ENCODE measurements at regions of chr4 and their contacts with region 1.

Region 1: GRCh38 chr4:17636696-17637622 is 22.5 kb downstream of the MED28 start:
- DNase-seq: peak; percentile 46 to 80 (median 72)
- ATAC-seq: peak; percentile 87
- H3K4me3 ChIP-seq: no peak overlapping the region
- H3K4me3 Mint-ChIP-seq: no peak overlapping the region
- H3K27ac ChIP-seq: no peak overlapping the region
- H3K27ac Mint-ChIP-seq: no peak overlapping the region
- H3K4me1 ChIP-seq: no peaks in the 10 kb centered on the region
- H3K4me1 Mint-ChIP-seq: peaks cover 2% of the 10 kb centered on the region
- H3K27me3 ChIP-seq: no peaks in the 10 kb centered on the region
- H3K27me3 Mint-ChIP-seq: no peaks in the 10 kb centered on the region
- CTCF ChIP-seq: peak; percentile 81

Region 2: GRCh38 chr4:17544205-17544604 is 92.8 kb before region 1 on chr4:
- CTCF ChIA-PET with region 1: interaction called, 45 read pairs
- POLR2A ChIA-PET with region 1: interaction called, 3 read pairs
- intact Hi-C with region 1: loop called (anchors 1 kb)
- DNase-seq: no peak
- ATAC-seq: no peak
- H3K4me3 ChIP-seq: no peak overlapping the region
- H3K4me3 Mint-ChIP-seq: no peak overlapping the region
- H3K27ac ChIP-seq: no peak overlapping the region
- H3K27ac Mint-ChIP-seq: no peak overlapping the region
- H3K4me1 ChIP-seq: no peaks in the 10 kb centered on the region
- H3K4me1 Mint-ChIP-seq: peaks cover 3% of the 10 kb centered on the region
- H3K27me3 ChIP-seq: no peaks in the 10 kb centered on the region
- H3K27me3 Mint-ChIP-seq: peaks cover 9% of the 10 kb centered on the region
- CTCF ChIP-seq: no peak

Region 3: GRCh38 chr4:17657090-17657489 is 20.1 kb after region 1 on chr4:
- CTCF ChIA-PET with region 1: interaction called, 10 read pairs
- POLR2A ChIA-PET with region 1: no interaction called
- intact Hi-C with region 1: no loop called
- DNase-seq: no peak
- ATAC-seq: no peak
- H3K4me3 ChIP-seq: no peak overlapping the region
- H3K4me3 Mint-ChIP-seq: no peak overlapping the region
- H3K27ac ChIP-seq: no peak overlapping the region
- H3K27ac Mint-ChIP-seq: no peak overlapping the region
- H3K4me1 ChIP-seq: no peaks in the 10 kb centered on the region
- H3K4me1 Mint-ChIP-seq: peaks cover 19% of the 10 kb centered on the region
- H3K27me3 ChIP-seq: no peaks in the 10 kb centered on the region
- H3K27me3 Mint-ChIP-seq: no peaks in the 10 kb centered on the region
- CTCF ChIP-seq: no peak